Activated T-helper 1 cell treated with anti-CD3 and anti-CD28 coated beads, Interleukin-12 subunit alpha, Interleukin-12 subunit beta, Interleukin-2, Interleukin-4 antibody, amounts not matched to agents 30 ng/mL and 10 ng/mL and 1 ng/mL, durations not matched to agents 14 hours and 24 hours and 36 hours (primary cell): ENCODE measurements at regions of chr6 and their contacts with region 1.

Region 1: GRCh38 chr6:2563635-2564034 is 187.1 kb downstream of the MYLK4 start:
- DNase-seq: peak; percentile 22
- H3K4me3 Mint-ChIP-seq: peak overlapping the region; percentile 13
- H3K27ac Mint-ChIP-seq: no peak overlapping the region
- H3K4me1 Mint-ChIP-seq: peaks cover 14% of the 10 kb centered on the region
- H3K27me3 Mint-ChIP-seq: peaks cover 56% of the 10 kb centered on the region

Region 2: GRCh38 chr6:2081155-2082138 is 482.2 kb before region 1 on chr6:
- intact Hi-C with region 1: loop called (anchors 1 kb)
- DNase-seq: peak; percentile 35
- H3K4me3 Mint-ChIP-seq: peak overlapping the region; percentile 3
- H3K27ac Mint-ChIP-seq: peak overlapping the region; percentile 71
- H3K4me1 Mint-ChIP-seq: peaks cover 51% of the 10 kb centered on the region
- H3K27me3 Mint-ChIP-seq: peaks cover 5% of the 10 kb centered on the region

Region 3: DNA sequence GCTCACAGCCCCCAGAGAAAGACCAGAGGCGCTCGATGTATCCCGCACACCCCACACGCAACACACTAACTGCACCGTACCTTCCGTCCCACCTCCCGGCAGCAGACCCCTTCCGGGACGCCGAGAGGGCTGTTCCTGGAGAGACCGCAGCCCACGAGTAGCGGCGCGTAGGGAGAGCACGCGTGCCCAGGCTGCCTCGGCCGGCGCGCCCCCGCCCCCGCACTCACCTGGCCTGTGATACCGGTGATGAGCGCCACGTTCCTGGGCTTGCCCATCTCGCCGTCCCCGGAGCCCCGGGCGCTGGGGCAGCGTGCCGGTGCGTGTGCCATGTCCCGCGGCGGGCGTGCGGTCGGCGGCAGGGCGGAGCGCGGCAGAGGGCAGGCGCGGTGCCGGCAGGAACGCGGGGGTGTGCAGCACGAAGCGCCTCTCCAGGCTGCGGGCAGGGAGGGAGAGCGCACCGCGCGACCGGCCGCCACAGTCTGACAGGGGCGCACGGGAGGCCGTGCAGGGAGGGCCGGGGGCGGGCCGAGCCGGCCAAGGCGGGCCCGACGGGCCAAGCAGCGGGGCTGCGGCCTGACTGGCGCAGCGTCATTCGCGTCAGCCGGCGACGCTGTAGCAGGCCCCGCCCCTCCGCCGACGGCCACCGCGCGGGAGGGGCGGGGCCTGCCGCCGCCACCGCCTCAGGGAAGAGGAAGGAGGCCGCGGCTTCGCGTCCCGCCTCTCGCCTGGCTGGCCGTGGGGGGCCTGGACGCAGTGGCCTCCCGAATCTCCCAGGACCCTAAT is 318.4 kb before region 1 on chr6 and contains the start of gene GMDS:
- intact Hi-C with region 1: loop called (anchors 1 kb)
- DNase-seq: peak; percentile 82
- H3K4me3 Mint-ChIP-seq: peak within 1 kb of the TSS; percentile 92
- H3K27ac Mint-ChIP-seq: peak within 1 kb of the TSS; percentile 89
- H3K4me1 Mint-ChIP-seq: peaks cover 76% of the 10 kb centered on the region
- H3K27me3 Mint-ChIP-seq: no peaks in the 10 kb centered on the region
- total RNA-seq, gene GMDS: 44.5 and 53.4 TPM in 2 replicates

Region 4: DNA sequence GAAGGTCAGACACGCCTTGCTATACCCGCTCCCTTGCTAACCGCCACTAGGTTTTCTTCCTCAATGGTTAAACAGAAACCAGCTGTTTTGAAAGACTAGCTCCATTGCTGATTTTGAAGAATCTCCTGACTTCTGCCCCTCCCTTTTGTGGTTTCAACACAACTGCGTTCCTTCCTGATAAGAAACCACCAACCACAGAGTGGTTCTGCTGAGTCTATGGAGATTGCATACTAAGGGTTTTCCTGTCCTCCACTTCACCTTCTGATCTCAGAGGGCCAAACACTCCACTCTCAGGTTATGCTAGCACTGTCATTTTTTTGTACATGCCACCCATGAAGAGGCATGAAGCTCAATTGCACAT is 20.8 kb before region 1 on chr6:
- intact Hi-C with region 1: loop called (anchors 1 kb)
- DNase-seq: peak; percentile 78
- H3K4me3 Mint-ChIP-seq: peak overlapping the region; percentile 41
- H3K27ac Mint-ChIP-seq: peak overlapping the region; percentile 74
- H3K4me1 Mint-ChIP-seq: peaks cover 39% of the 10 kb centered on the region
- H3K27me3 Mint-ChIP-seq: peaks cover 66% of the 10 kb centered on the region